Activated naive CD8-positive, alpha-beta T cell treated with anti-CD3 and anti-CD28 coated beads, Interleukin-2, amount 10 ng/mL, durations not matched to agents 7 days and 5 days (primary cell): ENCODE measurements at regions of chr6 and their contacts with region 1.

Region 1: DNA sequence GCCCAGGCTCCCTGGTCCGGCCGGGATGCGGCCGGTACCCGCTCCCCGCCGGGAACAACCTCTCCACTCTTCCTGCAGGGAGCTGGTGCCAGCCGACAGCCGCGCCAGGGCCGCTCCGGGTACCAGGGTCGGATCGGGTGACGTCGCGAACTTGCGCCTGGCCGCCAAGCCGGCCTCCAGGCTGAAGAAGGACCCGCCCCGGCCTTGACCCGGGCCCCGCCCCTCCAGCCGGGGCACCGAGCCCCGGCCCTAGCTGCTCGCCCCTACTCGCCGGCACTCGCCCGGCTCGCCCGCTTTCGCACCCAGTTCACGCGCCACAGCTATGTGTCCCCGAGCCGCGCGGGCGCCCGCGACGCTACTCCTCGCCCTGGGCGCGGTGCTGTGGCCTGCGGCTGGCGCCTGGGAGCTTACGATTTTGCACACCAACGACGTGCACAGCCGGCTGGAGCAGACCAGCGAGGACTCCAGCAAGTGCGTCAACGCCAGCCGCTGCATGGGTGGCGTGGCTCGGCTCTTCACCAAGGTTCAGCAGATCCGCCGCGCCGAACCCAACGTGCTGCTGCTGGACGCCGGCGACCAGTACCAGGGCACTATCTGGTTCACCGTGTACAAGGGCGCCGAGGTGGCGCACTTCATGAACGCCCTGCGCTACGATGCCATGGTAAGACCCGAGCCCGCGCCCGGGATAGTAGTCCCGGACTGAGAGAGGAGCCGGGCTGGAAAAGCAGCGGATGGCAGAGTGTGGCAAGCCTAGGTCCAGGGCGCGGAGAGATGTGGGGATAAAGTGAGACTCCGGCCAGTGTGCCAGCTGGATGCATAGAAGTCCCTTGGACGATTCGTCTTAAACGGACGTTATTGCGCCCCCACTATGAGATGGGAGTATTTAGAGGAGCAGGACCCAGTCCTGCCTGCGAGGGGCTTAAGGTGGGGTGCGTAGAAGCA is at the start of gene NT5E:
- DNase-seq: peak; percentile 77
- ATAC-seq: peak; percentile 54
- H3K4me3 Mint-ChIP-seq: peak within 1 kb of the TSS; percentile 96
- H3K27ac Mint-ChIP-seq: peak within 1 kb of the TSS; percentile 88
- H3K4me1 Mint-ChIP-seq: peaks cover 52% of the 10 kb centered on the region
- H3K27me3 Mint-ChIP-seq: no peaks in the 10 kb centered on the region
- total RNA-seq, gene NT5E: 26.8 to 30.7 TPM

Region 2: DNA sequence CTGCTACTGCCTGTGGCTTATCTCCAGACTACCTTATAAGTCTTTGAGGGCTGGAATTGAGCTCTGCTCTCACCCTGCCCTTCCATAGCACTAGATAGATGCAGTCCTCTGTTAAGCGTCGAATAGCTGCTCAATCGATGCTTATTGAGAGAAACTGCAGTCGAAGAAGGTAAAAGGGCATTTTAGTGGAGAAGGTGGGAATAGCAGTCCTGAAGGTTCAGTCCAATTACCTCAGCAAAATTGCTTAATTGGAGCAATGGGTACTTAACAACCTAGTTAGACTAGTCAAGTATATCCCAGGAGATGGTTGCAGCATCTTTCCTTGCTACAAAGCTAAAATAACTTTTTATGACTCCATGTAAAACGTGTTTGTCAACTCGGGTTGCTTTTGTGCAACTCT is 67.0 kb before region 1 on chr6:
- POLR2A ChIA-PET with region 1: no interaction called
- DNase-seq: no peak
- ATAC-seq: no peak
- H3K4me3 Mint-ChIP-seq: no peak overlapping the region
- H3K27ac Mint-ChIP-seq: no peak overlapping the region
- H3K4me1 Mint-ChIP-seq: peaks cover 8% of the 10 kb centered on the region
- H3K27me3 Mint-ChIP-seq: no peaks in the 10 kb centered on the region

Region 3: GRCh38 chr6:85403331-85404015 is 46.6 kb before region 1 on chr6:
- POLR2A ChIA-PET with region 1: interaction called, 14 read pairs
- DNase-seq: no peak
- ATAC-seq: no peak
- H3K4me3 Mint-ChIP-seq: no peak overlapping the region
- H3K27ac Mint-ChIP-seq: peak overlapping the region; percentile 1
- H3K4me1 Mint-ChIP-seq: peaks cover 52% of the 10 kb centered on the region
- H3K27me3 Mint-ChIP-seq: no peaks in the 10 kb centered on the region

Region 4: DNA sequence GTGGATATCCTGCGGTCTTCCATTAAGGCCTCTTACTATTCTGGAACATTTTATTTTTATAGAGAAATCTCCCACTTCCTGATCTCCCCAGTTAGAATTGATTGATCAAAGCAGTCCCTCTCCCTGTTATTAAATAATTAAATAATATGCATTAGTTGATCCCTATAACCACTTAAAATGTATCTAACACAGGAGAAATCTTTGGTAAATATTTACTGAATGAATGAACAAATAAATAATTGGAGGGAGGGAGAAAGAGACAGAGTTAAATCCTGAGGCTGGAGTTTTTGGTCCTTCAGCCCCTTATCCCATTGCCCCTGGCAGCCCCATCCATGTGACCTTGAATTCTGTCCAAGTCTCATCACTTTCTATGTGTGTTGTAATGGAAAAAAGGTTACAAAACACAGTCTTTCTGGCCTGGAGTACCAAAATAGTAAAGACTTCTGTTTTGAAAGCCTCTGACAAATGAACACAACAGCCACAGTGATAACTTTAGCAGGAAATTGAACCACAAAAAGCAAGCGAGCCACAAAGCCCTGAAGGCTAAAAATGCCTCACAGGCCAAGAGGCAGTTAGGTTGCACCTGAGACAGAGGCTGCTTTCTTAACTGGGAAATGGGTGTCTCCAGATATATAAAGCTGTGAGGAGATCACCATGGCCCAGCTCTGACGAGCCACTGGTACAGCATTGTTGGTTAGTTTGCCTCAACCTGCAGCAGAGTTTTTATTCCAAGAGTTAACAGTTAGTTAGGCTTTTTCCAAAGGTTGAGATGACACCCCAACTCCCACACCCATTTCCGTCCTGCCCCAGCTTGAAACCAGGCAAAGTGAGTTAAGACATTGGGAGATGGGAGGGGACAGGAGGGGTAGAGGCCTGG is 11.1 kb after region 1 on chr6:
- POLR2A ChIA-PET with region 1: interaction called, 90 read pairs
- DNase-seq: peak; percentile 47
- ATAC-seq: peak; percentile 78
- H3K4me3 Mint-ChIP-seq: peak overlapping the region; percentile 54
- H3K27ac Mint-ChIP-seq: peak overlapping the region; percentile 92
- H3K4me1 Mint-ChIP-seq: peaks cover 78% of the 10 kb centered on the region
- H3K27me3 Mint-ChIP-seq: no peaks in the 10 kb centered on the region

Region 5: DNA sequence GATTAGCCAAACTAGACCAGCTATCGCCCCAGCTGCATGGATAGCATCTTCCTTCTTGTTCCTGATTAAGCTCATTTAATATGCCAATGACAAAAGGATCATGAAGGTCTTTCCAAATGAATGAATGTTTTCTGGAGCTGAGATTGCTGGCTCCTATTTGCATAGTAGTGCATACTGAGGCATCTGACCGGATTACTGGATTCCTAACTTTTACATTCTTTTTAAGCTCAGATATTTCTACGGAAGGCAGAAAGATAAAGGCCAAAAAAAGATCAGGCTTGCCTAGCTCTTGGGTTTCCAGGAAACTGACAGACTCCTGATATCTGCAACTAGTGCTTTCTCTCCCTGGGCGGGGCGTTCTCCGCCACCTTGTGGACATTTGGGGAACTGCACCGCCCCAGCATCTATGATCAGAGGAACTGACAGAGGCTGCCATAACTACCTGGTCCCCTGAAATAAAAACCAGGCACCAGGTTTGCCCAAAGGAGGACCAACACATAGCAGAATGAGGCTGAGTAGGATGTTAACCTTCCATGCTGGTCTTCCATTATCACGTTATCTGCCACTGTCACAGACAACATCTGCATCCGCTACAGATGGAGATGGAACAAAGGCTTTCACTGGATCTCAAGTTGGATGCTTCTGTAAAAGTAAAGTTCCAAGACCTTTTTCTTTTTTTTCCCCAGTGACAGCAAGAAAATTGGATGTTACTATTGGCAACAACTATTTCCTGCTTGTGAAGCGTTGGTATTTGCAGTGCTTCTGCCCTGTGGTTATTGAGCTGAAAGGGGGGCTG is 33.0 kb after region 1 on chr6:
- POLR2A ChIA-PET with region 1: interaction called, 10 read pairs
- DNase-seq: peak; percentile 91
- ATAC-seq: peak; percentile 91
- H3K4me3 Mint-ChIP-seq: no peak overlapping the region
- H3K27ac Mint-ChIP-seq: peak overlapping the region; percentile 4
- H3K4me1 Mint-ChIP-seq: peaks cover 15% of the 10 kb centered on the region
- H3K27me3 Mint-ChIP-seq: no peaks in the 10 kb centered on the region

Region 6: DNA sequence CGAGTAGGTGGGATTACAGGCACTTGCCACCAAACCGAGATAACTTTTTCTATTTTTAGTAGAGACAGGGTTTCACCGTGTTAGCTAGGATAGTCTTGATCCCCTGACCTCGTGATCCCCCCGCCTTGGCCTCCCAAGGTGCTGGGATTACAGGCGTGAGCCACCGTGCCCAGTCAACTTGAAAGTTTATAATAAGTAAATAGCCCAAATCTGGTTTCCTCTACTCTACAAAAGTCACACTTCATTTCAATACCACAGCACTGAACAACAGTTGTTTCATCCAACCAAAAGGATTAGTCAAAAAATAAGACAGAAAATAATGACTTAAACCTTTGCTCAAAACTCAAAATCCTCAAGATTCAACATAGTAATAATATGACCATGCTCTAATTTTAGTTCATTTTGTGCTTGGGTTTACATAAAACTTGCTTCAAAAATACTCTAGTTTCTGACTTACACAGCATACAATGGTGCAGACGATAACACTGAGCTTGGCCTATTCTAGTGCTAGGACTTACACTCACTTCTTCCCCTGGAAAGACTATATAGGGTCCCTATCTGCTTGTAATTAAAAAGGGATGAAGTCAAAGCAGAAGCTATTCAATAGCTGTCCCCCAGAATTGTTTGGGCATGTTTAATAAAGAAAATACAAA is 56.5 kb after region 1 on chr6:
- POLR2A ChIA-PET with region 1: no interaction called
- DNase-seq: no peak
- ATAC-seq: no peak
- H3K4me3 Mint-ChIP-seq: no peak overlapping the region
- H3K27ac Mint-ChIP-seq: no peak overlapping the region
- H3K4me1 Mint-ChIP-seq: no peaks in the 10 kb centered on the region
- H3K27me3 Mint-ChIP-seq: no peaks in the 10 kb centered on the region